ENCODE measurements at regions of chr4 and their contacts with region 1.

Region 1: DNA sequence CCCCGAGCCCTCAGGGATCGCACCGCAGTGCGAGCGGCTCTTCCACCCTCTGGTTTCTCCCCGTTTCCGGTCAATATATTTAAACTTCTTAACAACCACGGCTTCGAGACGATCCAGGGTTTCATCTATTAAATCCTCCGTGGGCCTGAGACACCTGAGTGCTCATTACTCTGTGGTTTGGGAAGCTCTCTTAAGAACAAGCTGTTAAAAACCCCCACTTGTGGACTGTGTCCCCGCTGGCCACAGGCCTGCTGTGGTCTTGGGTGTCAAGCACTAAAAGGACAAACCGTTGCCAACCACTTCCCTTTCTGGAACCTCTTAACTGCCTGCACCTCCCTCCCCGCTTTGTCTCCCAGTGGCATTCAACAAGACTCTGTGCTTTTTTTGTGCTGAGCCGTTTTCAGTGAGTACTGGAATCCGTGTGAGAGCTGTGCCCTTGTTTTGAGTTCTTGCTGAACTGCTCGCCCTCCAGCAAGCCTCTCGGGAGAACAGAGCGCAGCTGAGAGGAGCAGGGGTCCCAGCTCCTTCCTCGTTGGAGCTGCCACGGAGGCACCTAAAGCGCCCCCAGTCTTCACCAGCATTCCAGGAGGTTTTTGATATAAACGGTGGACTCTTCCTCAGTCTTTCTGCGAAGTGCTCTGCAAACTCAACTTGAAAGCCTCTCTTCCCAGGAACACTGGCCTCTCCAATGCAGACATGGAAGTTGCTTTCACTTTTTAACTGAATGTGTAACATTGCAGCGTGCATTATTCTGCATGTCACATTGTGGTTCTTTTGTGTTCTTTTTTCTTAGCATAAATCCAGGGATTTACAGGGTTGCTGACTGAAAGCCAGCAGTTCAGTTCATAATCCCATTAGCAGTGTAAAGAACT is 691 bp upstream of the IGFBP7 start:
- H3K4me3 Mint-ChIP-seq: peak overlapping the region; percentile 84
- H3K27ac Mint-ChIP-seq: peak overlapping the region; percentile 99
- H3K4me1 Mint-ChIP-seq: peaks cover 36% of the 10 kb centered on the region
- H3K27me3 Mint-ChIP-seq: peaks cover 4% of the 10 kb centered on the region

Region 2: DNA sequence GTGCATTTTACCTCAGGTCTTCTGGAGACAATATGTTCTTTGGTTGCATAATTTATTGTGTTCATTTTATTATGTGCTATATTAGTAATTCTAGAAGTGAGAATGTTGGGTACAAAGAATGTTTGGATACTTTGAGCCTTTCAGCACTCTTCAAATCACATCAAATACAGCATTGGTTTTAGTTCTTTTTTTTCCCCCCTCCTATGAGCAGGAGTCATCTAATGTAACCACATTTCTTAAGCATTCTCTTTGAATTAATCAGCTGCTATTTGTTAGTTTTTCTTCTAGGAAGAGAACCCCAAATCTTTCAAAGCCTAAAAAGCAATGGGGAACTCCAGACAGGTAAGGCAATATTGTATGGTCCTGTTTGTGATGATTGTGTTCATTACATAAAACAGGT is 558.6 kb before region 1 on chr4:
- intact Hi-C with region 1: no loop called
- H3K4me3 Mint-ChIP-seq: no peak overlapping the region
- H3K27ac Mint-ChIP-seq: no peak overlapping the region
- H3K4me1 Mint-ChIP-seq: no peaks in the 10 kb centered on the region
- H3K27me3 Mint-ChIP-seq: no peaks in the 10 kb centered on the region

Region 3: DNA sequence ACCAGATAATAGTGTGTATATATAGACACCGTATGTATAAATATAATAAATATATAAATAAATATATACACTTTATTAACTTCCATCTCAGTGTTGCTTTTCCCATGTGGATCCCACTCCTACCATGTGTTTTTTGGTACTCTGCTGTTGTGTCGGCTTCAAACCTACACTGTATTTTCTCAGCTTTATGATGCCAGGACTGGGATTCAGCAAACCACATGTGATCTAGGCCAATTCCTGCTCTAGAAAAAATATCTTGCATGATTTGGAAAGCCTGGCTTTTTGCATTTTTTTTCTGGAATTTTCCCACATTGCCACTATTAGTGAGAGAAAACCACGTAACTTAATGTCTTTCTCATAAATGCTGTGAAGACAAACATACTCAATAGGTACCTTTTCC is 76.4 kb before region 1 on chr4:
- intact Hi-C with region 1: loop called (anchors 5 kb)
- H3K4me3 Mint-ChIP-seq: no peak overlapping the region
- H3K27ac Mint-ChIP-seq: no peak overlapping the region
- H3K4me1 Mint-ChIP-seq: peaks cover 5% of the 10 kb centered on the region
- H3K27me3 Mint-ChIP-seq: no peaks in the 10 kb centered on the region

Region 4: GRCh38 chr4:57163530-57164459 is 52.9 kb after region 1 on chr4:
- intact Hi-C with region 1: loop called (anchors 5 kb)
- H3K4me3 Mint-ChIP-seq: peak overlapping the region; percentile 95
- H3K27ac Mint-ChIP-seq: peak overlapping the region; percentile 69
- H3K4me1 Mint-ChIP-seq: peaks cover 13% of the 10 kb centered on the region
- H3K27me3 Mint-ChIP-seq: peaks cover 24% of the 10 kb centered on the region

Measured in dendritic cell treated with granulocyte-macrophage colony-stimulating factor and Interleukin-4, amounts not matched to agents 40 ng/mL and 50 ng/mL, for 4 days (primary cell).